ENCODE measurements at regions of chr16 and their contacts with region 1.

Region 1: DNA sequence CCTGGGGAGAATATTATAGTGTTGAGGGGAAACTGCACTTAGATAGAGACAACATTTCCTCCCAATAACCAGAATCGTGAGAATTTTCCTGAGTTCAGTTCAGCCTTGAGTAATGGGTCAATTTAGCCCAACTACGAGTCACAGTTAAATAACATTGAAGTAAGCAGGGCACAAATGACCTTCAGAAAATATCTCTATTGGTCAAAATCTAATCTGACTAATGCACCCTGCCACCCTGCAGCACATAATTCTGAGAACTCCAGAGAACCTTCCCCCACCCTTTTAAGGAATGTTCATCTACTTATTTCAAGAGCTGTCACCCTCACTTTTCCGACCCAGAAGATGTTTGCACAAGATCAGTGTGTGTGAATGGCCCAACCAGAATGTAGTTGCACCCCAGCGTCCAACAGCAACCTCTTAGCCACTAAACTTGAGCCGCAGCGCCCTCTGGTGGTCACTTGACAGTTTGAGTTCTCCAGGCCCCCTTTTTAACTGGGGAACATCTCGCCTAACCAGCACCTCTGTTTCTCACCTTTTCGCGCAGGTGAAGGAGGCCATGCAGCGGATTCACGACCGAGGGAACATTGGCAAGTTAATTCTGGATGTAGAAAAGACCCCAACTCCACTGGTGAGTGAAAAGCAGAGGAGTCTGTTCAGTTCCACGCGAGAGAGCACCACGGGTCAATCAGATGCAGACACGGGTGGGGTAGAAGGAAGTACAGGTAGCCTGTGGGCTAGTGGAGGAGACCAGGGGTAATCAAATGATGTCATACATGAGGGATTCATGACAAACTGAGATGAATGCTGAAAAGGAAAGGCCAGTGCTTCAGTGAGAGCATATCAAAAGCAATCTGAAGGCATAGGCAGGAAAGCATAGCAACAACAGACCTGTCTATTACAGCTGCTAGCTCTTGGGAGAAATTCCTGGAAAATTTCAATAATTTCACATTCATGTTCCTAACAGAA is 50.8 kb upstream of the CLEC3A start:
- DNase-seq: peak; percentile 82
- H3K4me3 ChIP-seq: no peak overlapping the region
- H3K27ac ChIP-seq: no peak overlapping the region
- H3K4me1 ChIP-seq: no peaks in the 10 kb centered on the region
- H3K27me3 ChIP-seq: no peaks in the 10 kb centered on the region
- CTCF ChIP-seq: peak; percentile 64

Region 2: DNA sequence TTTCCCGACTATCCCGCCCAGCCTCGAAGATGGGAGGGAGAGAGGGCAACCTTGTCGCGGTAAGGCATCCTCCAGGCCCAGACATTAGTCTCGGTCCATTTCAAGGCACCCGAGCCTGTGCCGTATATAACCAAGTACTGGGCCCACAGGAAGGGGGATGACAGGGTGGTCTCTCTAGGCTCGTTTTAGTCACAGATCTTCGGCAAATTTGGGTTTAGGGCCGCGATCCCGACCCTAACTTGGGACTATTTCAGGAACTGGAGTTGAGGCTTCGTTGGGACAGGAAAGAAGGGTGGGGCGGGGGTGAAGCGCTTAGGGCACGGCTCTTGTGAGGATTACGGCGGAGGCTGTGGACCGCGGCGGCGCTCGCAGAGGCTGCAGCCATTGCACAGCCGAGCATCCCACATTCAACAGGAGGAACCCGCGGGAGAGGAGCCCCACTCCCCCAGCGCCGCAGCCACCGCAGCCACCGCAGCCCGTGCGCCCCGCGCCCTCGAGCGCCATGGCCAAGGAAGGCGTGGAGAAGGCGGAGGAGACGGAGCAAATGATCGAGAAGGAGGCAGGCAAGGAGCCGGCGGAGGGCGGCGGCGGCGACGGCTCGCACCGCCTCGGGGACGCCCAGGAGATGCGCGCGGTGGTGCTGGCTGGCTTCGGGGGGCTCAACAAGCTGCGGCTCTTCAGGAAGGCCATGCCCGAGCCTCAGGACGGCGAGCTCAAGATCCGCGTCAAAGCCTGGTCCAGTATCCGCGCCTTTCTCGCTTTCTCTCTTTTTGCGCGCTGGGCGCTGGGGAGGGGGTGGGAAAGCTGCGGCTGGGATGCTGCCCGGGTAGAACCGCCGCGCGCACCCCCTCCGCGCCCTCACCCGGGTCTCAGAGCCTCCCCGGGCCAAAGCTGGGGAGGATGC is 183.2 kb before region 1 on chr16 and contains the start of gene VAT1L:
- intact Hi-C with region 1: loop called (anchors 5 kb)
- DNase-seq: peak; percentile 24
- H3K4me3 ChIP-seq: peak within 1 kb of the TSS; percentile 30
- H3K27ac ChIP-seq: no peak within 1 kb of the TSS
- H3K4me1 ChIP-seq: no peaks in the 10 kb centered on the region
- H3K27me3 ChIP-seq: peaks cover 32% of the 10 kb centered on the region
- CTCF ChIP-seq: no peak
- total RNA-seq, gene VAT1L: 1.4 to 3.3 TPM

Region 3: DNA sequence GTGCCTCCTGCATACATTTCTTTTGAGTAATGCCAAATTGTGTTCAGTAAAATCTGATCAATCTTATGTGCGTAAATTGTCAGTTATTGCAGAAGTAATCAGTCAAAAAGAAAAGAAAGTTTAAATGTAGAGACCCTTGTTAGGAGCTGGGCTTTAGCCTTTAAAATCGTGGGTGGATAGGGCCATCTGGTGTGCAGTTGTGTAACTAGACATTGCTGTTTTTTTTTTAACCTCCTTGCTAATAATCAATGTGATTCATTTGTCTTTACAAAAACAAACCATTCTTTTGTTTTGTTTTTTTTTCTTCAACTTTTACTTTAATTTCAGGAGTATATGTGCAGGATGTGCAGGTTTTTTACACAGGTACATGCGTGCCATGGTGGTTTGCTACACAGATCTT is 122.6 kb after region 1 on chr16:
- intact Hi-C with region 1: no loop called
- DNase-seq: no peak
- H3K4me3 ChIP-seq: no peak overlapping the region
- H3K27ac ChIP-seq: no peak overlapping the region
- H3K4me1 ChIP-seq: no peaks in the 10 kb centered on the region
- H3K27me3 ChIP-seq: no peaks in the 10 kb centered on the region
- CTCF ChIP-seq: no peak